ENCODE measurements at regions of chr14 and their contacts with region 1.

Region 1: DNA sequence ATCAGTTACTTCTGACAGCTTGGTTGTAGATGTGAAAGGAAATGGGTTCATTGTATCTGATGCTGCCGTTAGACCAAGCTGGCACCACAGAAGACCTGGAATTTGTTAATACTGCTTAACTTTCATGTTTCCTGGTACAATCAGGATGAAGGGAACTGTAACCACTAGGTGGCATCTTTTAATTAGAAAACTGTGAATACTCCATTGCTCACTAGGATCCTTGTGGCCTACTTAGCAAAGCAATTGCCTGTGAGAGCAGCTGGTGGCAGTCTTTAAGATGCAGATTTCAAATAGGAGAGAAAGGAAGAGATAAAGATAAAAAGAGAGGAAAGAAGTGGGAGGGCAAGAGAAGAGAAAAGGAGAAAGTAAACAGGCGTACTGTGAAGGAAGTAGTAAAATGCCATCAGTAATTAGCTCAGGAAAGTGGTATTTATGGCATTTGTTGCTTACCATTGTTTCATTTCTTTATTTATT is 114.5 kb downstream of the RAD51B start:
- DNase-seq: peak; percentile 42
- ATAC-seq: peak; percentile 98
- H3K4me3 ChIP-seq: no peak overlapping the region
- H3K27ac ChIP-seq: no peak overlapping the region
- H3K4me1 ChIP-seq: no peaks in the 10 kb centered on the region
- H3K27me3 ChIP-seq: no peaks in the 10 kb centered on the region
- CTCF ChIP-seq: peak; percentile 46 to 65 (median 62)
- EP300 ChIP-seq: no peak
- POLR2A ChIP-seq: no peak
- RAD21 ChIP-seq: peak; percentile 76

Region 2: GRCh38 chr14:67883717-67884116 is 50.3 kb before region 1 on chr14:
- CTCF ChIA-PET with region 1: interaction called, 16 read pairs
- POLR2A ChIA-PET with region 1: interaction called, 4 read pairs
- RAD21 ChIA-PET with region 1: interaction called, 5 read pairs
- SMC1A ChIA-PET with region 1: interaction called, 8 read pairs
- in situ Hi-C with region 1: no loop called
- intact Hi-C with region 1: no loop called
- DNase-seq: no peak
- ATAC-seq: no peak
- H3K4me3 ChIP-seq: no peak overlapping the region
- H3K27ac ChIP-seq: no peak overlapping the region
- H3K4me1 ChIP-seq: peaks cover 17% of the 10 kb centered on the region
- H3K27me3 ChIP-seq: no peaks in the 10 kb centered on the region
- CTCF ChIP-seq: peak in 1 of 3 experiments; percentile 7; a peak in 1 of 6 replicates
- EP300 ChIP-seq: no peak
- POLR2A ChIP-seq: no peak
- RAD21 ChIP-seq: no peak

Region 3: GRCh38 chr14:67900231-67900630 is 33.8 kb before region 1 on chr14:
- CTCF ChIA-PET with region 1: interaction called, 10 read pairs
- POLR2A ChIA-PET with region 1: no interaction called
- RAD21 ChIA-PET with region 1: no interaction called
- SMC1A ChIA-PET with region 1: interaction called, 4 read pairs
- in situ Hi-C with region 1: no loop called
- intact Hi-C with region 1: no loop called
- DNase-seq: no peak
- ATAC-seq: no peak
- H3K4me3 ChIP-seq: no peak overlapping the region
- H3K27ac ChIP-seq: no peak overlapping the region
- H3K4me1 ChIP-seq: no peaks in the 10 kb centered on the region
- H3K27me3 ChIP-seq: no peaks in the 10 kb centered on the region
- CTCF ChIP-seq: no peak
- EP300 ChIP-seq: no peak
- POLR2A ChIP-seq: no peak
- RAD21 ChIP-seq: no peak

Region 4: GRCh38 chr14:68418174-68419118 is 484.4 kb after region 1 on chr14:
- CTCF ChIA-PET with region 1: no interaction called
- POLR2A ChIA-PET with region 1: no interaction called
- RAD21 ChIA-PET with region 1: no interaction called
- SMC1A ChIA-PET with region 1: no interaction called
- in situ Hi-C with region 1: no loop called
- intact Hi-C with region 1: no loop called
- DNase-seq: no peak
- ATAC-seq: peak; percentile 80
- H3K4me3 ChIP-seq: no peak overlapping the region
- H3K27ac ChIP-seq: peak overlapping the region; percentile 51
- H3K4me1 ChIP-seq: peaks cover 19% of the 10 kb centered on the region
- H3K27me3 ChIP-seq: no peaks in the 10 kb centered on the region
- CTCF ChIP-seq: no peak
- EP300 ChIP-seq: no peak
- POLR2A ChIP-seq: no peak
- RAD21 ChIP-seq: no peak

Region 5: GRCh38 chr14:68824517-68825347 is 890.7 kb after region 1 on chr14:
- CTCF ChIA-PET with region 1: interaction called, 20 read pairs
- POLR2A ChIA-PET with region 1: no interaction called
- RAD21 ChIA-PET with region 1: interaction called, 8 read pairs
- SMC1A ChIA-PET with region 1: interaction called, 7 read pairs
- in situ Hi-C with region 1: loop called (anchors 10 kb)
- intact Hi-C with region 1: no loop called
- DNase-seq: no peak
- ATAC-seq: peak; percentile 10; the same call in 1 of the 3 replicates
- H3K4me3 ChIP-seq: no peak overlapping the region
- H3K27ac ChIP-seq: no peak overlapping the region; the same call in 1 of the 2 replicates
- H3K4me1 ChIP-seq: peaks cover 50% of the 10 kb centered on the region
- H3K27me3 ChIP-seq: no peaks in the 10 kb centered on the region
- CTCF ChIP-seq: peak; percentile 90 to 93 (median 90)
- EP300 ChIP-seq: no peak
- POLR2A ChIP-seq: no peak
- RAD21 ChIP-seq: peak; percentile 64; the same call in 1 of the 2 replicates